Common myeloid progenitor, CD34-positive (primary cell): ENCODE measurements at regions of chr12 and their contacts with region 1.

Region 1: GRCh38 chr12:55619354-55620138 is 17.1 kb upstream of the OR10P1 start:
- DNase-seq: peak; percentile 89 to 95 (median 93)
- H3K4me3 ChIP-seq: no peak overlapping the region
- H3K27ac ChIP-seq: no peak overlapping the region
- H3K4me1 ChIP-seq: peaks cover 0 to 2% (median 0%) of the 10 kb centered on the region in 4 experiments
- H3K27me3 ChIP-seq: peaks cover 0 to 3% (median 2%) of the 10 kb centered on the region in 5 experiments

Region 2: DNA sequence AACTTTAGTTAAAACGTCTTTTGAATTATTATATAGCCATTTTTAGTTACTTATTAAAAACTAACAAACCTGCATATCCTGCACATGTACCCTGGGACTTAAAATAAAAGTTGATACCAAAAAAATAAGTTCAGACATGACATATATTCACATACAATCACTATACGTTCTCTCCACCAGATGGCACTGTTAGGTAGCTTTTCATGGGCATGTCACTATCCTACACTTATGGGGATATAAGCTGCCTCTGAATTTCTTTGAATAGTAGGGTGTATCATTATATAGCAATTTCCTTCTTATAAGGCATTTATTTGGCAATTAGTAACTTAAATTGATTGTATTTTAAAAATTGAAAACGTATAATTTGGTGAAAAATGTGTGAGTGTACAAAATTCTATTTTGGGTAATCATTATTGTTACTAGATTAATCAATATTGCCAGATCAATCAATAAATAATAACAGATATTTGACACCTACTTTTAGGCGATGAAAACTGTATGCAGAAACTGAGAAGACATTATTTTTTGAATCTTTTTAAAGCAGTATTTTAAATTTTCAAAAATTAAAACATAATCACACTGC is 430.5 kb before region 1 on chr12:
- CTCF ChIA-PET with region 1: interaction called, 31 read pairs
- POLR2A ChIA-PET with region 1: no interaction called
- DNase-seq: peak; percentile 73 to 89 (median 84)
- H3K4me3 ChIP-seq: no peak overlapping the region
- H3K27ac ChIP-seq: no peak overlapping the region
- H3K4me1 ChIP-seq: no peaks in the 10 kb centered on the region
- H3K27me3 ChIP-seq: peaks cover 0 to 4% (median 0%) of the 10 kb centered on the region in 5 experiments

Region 3: GRCh38 chr12:55515696-55516095 is 103.8 kb before region 1 on chr12:
- CTCF ChIA-PET with region 1: no interaction called
- POLR2A ChIA-PET with region 1: no interaction called
- DNase-seq: no peak
- H3K4me3 ChIP-seq: no peak overlapping the region
- H3K27ac ChIP-seq: no peak overlapping the region
- H3K4me1 ChIP-seq: no peaks in the 10 kb centered on the region
- H3K27me3 ChIP-seq: no peaks in the 10 kb centered on the region

Region 4: DNA sequence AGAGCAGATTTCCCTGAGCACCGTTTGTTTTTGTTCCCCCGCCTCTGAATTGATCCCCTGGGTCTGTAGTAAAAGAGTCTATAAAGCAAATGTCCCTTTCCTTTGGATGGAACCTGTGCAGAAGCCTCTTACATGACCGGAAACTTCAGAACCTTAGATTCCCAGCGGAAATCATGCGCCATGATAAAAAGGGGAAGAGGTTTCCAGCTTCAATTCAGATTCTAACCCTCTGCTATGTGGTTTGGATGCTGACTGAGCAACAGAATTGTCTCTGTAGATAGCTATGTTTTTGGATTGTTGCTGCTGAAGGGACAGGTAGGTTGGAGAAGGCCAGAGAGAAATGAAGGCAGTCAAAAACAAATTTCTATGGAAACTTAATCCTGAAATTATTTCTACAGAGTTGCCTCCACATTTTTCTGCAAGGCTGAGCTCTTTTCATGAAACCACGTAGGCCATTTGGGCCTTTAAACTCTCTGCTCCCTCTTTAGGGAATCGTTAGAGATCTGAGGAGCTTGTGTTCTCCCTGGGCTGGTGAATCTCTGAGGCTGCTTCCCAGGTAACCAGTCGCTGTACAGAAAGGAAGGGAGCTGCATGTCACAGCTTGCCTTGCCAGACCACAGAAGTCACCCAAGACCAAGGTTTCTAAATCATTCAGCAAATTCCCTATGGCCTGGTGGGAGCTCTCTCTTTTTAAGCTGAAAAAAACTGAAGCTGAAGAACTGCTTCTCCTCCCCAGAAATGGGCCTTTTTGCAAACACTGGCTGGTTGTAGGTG is 11.5 kb before region 1 on chr12:
- CTCF ChIA-PET with region 1: no interaction called
- POLR2A ChIA-PET with region 1: no interaction called
- DNase-seq: no peak
- H3K4me3 ChIP-seq: no peak overlapping the region
- H3K27ac ChIP-seq: no peak overlapping the region
- H3K4me1 ChIP-seq: no peaks in the 10 kb centered on the region
- H3K27me3 ChIP-seq: peaks cover 0 to 2% (median 0%) of the 10 kb centered on the region in 5 experiments